BJ (cell line): ENCODE measurements at regions of chr20 and their contacts with region 1.

Region 1: DNA sequence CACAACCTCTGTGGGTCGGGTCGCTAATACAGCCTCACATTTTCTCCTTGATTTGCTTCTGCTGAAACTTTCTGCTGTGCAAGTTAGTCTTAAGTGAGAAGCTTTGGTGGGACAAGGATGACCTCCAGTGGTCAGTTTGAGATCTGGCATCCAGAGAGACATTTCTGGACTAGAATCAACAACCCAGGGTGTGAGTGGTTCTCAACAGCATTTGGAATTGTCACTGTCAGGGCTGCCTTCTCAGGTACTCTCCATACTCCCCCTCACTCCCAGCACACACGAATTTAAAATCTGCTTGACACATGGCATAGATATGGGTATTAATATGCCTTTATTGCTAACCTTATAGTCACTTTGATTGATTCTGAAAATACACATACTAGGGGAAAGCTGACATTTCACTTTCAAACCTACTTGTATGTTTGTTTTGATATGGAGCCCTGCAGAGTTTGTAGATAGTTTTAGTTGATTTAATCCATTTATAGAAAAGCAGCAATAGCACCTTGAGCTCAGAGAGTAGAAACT is 13.2 kb downstream of the OTOR start:
- DNase-seq: peak; percentile 8
- H3K4me3 ChIP-seq: no peak overlapping the region
- H3K27me3 ChIP-seq: peaks cover 1% of the 10 kb centered on the region
- CTCF ChIP-seq: peak; percentile 74

Region 2: GRCh38 chr20:16517946-16518783 is 243.2 kb before region 1 on chr20:
- CTCF ChIA-PET with region 1: interaction called, 12 read pairs
- POLR2A ChIA-PET with region 1: no interaction called
- DNase-seq: no peak
- H3K4me3 ChIP-seq: no peak overlapping the region
- H3K27me3 ChIP-seq: no peaks in the 10 kb centered on the region
- CTCF ChIP-seq: peak; percentile 59

Region 3: DNA sequence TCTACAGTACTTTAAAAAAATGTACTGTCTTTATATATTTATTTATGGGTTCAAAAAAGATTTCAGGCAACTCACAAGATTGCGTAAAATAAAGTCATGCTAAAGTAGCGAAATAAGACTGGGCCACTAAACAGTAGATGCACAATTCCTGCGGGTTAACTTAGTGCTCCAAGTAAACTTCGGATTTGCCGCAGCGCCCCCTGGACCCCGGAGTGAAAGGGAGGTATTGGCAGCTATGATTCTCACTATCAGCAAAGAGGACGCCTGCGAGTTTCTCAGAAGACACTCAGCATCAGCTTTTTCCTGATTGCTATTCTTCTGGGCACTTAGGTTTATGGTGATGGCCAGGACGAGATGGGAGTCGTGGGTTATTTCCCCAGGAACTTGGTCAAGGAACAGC is 11.8 kb before region 1 on chr20:
- CTCF ChIA-PET with region 1: interaction called, 27 read pairs
- POLR2A ChIA-PET with region 1: no interaction called
- DNase-seq: no peak
- H3K4me3 ChIP-seq: no peak overlapping the region
- H3K27me3 ChIP-seq: no peaks in the 10 kb centered on the region; the same call in none of the 2 replicates
- CTCF ChIP-seq: no peak